GM10248 (cell line): ENCODE measurements at regions of chr16 and their contacts with region 1.

Region 1: GRCh38 chr16:48398752-48399151 is 13.5 kb upstream of the SIAH1 start:
- DNase-seq: no peak
- CTCF ChIP-seq: no peak

Region 2: DNA sequence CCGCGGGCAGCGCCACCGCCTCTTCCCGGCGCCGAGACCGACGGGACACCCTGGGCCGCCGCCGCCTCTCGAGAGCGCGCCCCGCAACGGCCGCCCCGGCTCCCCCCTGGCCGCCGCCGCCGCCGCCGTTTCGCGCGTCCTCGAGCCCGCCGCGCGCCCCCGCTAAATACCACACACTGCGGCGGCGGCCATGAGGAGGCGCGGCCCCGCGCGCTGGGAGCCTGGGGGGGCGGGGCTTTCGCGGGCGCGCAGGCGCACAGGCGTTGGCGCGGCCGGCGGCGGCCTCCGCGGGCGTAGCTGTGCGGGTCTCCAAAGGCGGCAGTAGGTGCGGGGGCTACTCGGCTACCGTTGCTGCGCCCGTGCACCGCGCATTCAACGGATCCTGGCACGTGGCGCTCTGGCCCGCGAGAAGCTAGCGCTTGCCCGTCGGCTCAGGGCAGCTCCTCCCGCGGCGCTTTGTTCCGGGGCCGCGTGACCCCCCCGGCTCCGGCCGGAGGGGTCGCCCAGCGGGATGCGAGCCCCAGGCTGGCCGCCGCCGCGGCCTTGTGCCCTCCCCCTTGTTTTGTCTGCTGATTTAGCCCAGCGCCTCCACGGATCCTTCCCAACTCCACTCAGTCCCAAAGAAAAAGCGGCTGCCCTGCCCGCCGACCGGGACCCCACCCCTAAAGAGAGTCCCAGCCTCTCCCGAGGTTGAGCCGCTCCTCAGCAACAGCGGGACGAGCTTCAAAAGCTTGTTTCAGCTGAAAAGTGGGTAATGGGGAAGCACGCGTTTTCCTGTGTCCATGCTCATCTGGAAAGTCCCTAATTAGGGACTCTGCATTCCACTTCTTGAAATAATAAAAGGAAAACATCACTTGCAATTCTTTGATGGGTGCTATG is 13.2 kb before region 1 on chr16 and contains the start of gene SIAH1:
- CTCF ChIA-PET with region 1: interaction called, 15 read pairs
- POLR2A ChIA-PET with region 1: no interaction called
- DNase-seq: peak; percentile 94
- CTCF ChIP-seq: no peak

Region 3: DNA sequence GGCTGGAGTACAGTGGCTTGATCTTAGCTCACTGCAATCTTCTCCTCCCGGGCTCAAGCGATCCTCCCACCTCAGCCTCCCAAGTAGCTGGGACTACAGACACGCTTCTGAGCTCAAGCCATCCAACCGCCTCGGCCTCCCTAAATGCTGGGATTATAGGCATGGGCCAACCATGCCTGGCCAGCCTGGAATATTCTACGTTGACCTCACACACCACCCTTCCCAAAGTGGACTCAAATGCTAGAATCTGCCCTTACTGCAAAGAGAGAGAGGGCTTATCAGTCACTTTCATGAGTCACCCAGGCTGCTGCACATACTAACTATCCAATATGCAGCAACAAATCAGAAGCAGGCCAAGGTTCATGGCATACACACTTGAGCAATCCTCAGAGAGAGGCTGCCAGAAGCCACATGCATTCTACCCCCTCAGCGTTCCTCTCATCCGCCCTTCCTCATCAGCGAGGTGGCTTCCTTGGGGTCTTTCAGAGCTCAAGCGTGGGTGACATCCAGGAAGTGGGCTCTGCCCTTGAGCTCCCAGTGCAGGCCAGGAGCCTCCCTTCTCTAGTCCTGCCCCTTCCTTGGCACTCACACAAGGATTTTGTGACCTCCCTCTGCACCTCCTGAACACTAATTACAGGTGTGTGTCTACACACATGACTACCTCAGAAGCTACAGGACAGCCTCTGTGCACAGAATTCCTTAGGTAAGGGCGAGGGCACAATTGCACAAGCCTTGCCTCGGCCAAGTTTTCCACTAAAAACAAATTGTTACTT is 11.3 kb after region 1 on chr16:
- CTCF ChIA-PET with region 1: interaction called, 3 read pairs
- POLR2A ChIA-PET with region 1: interaction called, 10 read pairs
- DNase-seq: no peak
- CTCF ChIP-seq: no peak

Region 4: DNA sequence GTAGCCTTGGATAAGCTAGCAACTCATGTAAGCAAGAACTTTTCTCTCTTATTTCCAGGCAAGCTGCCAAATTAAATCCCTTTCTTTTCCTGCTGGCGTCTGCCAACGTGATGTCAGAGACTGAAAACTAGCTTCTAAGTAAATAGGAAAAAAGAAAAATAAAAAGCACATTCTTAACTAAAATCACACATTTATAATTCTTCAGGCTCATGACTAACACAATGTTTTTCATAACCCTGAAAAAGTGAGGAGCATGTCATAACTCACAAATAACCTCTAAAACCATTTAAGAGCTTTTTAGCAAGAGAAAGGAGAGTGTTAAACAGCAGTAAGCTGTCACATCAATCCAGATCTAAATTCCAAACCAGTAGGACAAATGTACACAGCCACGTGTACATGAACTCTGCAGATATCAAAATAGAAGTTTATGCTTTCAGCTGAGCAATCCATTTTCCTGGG is 101.2 kb after region 1 on chr16:
- CTCF ChIA-PET with region 1: no interaction called
- POLR2A ChIA-PET with region 1: no interaction called
- DNase-seq: no peak
- CTCF ChIP-seq: no peak